Posterior vena cava (tissue), 2 donors: ENCODE measurements at regions of chr2 and their contacts with region 1.

Region 1: GRCh38 chr2:12605936-12606335 is 110.8 kb upstream of the TRIB2 start:
- DNase-seq: no peak

Region 2: GRCh38 chr2:12416600-12416999 is 189.3 kb before region 1 on chr2:
- intact Hi-C with region 1: no loop called
- DNase-seq: no peak

Region 3: DNA sequence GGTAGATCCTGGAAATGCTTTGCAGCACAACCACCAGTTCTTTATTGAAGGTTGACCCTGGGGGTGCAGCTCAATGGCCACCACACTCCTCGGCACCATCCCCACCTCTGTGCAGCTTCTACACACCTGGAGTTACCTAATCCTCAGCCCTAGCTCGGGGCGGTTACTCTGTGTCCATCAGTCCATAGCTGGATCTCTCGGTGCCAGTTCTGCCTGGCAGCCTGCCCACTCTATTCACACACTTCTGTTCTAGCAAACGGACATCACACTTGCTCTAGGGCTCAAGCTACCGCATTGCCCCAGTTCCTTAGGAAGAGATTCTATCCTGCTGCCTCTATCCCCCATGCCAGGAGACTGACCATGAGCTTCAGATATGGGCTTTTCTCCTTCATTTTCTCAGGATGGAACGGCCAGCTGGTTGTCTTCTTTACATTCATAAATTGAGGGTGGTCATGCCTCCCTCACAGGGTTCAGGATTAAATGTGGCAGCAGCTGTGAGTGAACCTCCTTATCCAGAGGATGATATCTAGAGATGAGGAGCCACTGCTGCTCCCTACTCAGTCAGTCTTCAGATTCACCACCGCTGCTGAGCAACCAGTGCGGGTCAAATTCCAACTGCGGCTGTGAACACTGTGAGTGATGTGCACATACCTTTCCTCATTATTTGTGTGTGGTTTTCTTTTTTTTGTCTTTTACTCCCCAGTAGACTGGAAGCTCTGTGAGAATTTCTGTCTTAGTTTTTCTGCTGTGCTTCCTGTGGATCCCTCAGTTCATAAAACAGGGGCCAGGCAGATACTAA is 43.9 kb after region 1 on chr2:
- intact Hi-C with region 1: loop called in 1 of 2 experiments (anchors 1 kb)
- DNase-seq: no peak

Region 4: DNA sequence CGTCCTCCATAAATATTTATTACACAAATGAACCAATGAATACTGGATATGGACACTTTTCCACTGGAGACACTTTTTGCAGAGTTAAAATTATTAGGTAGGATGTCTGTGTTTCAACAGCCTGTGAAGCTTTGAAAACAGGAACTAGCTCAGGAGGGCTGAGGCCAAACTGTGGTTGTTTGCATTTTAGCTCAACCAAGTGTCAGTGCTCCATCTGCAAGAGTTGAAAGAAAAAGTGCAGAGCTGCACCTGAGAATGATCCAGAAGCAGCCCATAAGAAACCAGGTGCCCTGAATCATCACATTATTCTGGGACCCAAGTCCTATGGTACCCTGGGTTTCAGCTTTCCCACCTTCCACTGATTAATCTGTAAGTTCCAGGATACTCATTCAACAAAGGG is 291.2 kb after region 1 on chr2:
- intact Hi-C with region 1: no loop called
- DNase-seq: no peak